ENCODE measurements at regions of chr1 and their contacts with region 1.

Region 1: GRCh38 chr1:225642177-225642576 is 10.7 kb downstream of the ENAH start:
- DNase-seq: no peak

Region 2: GRCh38 chr1:225517697-225518096 is 124.5 kb before region 1 on chr1:
- intact Hi-C with region 1: loop called in 1 of 2 experiments (anchors 10 kb)
- DNase-seq: no peak

Region 3: DNA sequence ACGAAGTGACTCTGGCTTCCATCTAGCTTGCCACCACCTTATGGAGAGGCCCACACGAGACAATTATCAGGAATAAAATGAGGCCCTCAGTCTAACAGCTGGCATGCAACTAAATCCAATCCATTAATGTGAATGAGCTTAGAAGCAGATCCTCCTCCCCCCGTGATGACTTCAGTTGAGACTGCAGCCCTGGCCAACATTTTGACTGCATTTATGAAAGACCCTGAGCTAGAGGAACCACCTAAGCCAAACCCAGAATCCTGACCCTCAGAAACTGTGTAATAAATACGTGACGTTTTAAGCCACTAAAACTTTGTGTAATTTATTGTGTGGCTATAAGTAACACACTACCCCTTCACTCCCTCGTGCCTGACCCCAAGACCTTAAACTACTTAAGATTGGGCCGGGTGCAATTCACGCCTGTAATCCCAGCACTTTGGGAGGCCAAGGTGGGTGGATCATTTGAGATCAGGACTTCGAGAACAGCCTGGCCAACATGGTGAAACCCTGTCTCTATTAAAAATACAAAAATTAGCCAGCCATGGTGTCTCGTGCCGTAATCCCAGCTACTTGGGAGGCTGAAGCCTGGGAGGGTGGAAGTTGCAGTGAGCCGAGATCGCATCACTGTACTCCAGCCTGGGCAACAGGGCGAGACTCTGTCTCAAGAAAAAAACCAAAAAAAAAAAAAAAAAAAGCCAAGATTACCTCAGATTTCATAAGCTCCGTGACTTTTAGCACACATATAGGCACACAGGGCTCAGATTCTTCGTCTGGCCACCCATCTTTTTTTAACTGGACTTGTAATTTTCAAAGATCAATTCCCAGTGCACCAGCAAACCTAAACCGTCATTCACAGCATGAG is 61.7 kb before region 1 on chr1:
- intact Hi-C with region 1: loop called in 1 of 2 experiments (anchors 10 kb)
- DNase-seq: peak; percentile 78

Measured in posterior vena cava (tissue), 2 donors.